Activated CD8-positive, alpha-beta T cell treated with anti-CD3 and anti-CD28 coated beads for 36 hours (primary cell): ENCODE measurements at regions of chr3 and their contacts with region 1.

Region 1: DNA sequence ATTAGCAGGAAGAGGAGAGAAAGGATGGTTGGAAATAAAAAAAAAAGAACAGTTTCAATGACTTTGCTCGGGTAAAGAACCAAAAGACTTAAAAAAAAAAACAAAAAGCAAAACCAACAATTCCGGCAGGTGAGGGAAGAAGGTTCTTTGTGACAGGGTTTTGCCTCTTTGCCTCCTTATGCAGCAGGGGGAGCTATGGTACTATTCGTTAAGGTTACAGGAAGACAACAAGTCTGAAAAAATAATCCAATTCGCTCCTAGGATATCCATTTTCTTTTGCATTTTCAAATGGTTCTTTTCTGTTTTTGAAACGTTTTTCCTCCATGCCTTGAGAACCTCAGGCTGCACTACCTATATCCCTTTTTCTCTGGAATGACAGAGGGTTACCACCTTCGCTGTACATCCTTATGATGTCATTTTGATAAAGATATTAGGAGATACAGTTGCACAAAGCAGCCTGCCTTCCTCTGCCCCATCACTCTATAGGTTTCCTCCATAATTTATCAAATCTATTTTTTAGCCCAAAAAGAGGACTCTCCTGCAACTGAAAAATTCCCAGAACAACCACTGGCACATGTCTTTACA is 55.0 kb downstream of the CFAP20DC start:
- DNase-seq: peak; percentile 50
- ATAC-seq: peak; percentile 55
- H3K4me3 Mint-ChIP-seq: no peak overlapping the region
- H3K27ac Mint-ChIP-seq: no peak overlapping the region
- H3K4me1 Mint-ChIP-seq: no peaks in the 10 kb centered on the region
- H3K27me3 Mint-ChIP-seq: peaks cover 1% of the 10 kb centered on the region
- CTCF ChIP-seq: peak; percentile 71

Region 2: GRCh38 chr3:59006634-59007517 is 12.0 kb after region 1 on chr3:
- CTCF ChIA-PET with region 1: no interaction called
- POLR2A ChIA-PET with region 1: no interaction called
- intact Hi-C with region 1: no loop called
- DNase-seq: no peak
- ATAC-seq: no peak
- H3K4me3 Mint-ChIP-seq: no peak overlapping the region
- H3K27ac Mint-ChIP-seq: no peak overlapping the region
- H3K4me1 Mint-ChIP-seq: no peaks in the 10 kb centered on the region
- H3K27me3 Mint-ChIP-seq: peaks cover 17% of the 10 kb centered on the region
- CTCF ChIP-seq: no peak

Region 3: DNA sequence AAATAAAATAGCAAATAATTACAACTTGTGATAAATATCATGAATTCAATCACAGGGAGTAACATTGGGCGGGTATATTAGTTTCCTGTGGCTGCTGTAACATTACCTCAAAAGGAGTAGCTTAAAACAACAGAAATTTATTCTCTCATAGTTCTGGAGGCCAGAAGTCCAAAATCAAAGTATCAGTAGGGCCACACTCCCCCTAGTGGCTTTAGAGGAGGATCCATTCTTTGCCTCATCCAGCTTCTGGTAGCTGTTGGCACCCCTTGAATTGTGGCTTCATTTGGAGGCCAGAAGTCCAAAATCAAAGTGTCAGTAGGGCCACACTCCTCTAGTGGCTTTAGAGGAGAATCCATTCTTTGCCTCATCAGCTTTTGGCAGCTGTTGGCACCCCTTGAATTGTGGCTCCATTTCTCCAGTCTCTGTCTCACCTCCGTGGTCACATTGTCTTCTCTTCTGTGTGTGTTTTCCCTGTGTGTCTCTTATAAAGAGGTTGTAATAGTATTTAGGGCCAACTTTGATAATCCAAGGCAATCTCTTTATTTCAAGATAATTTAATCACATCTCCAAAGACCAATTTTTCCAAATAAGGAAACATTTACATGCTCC is 58.1 kb after region 1 on chr3:
- CTCF ChIA-PET with region 1: interaction called, 8 read pairs
- POLR2A ChIA-PET with region 1: no interaction called
- intact Hi-C with region 1: loop called (anchors 2 kb)
- DNase-seq: peak; percentile 28
- ATAC-seq: no peak
- H3K4me3 Mint-ChIP-seq: no peak overlapping the region
- H3K27ac Mint-ChIP-seq: no peak overlapping the region
- H3K4me1 Mint-ChIP-seq: peaks cover 3% of the 10 kb centered on the region
- H3K27me3 Mint-ChIP-seq: peaks cover 4% of the 10 kb centered on the region
- CTCF ChIP-seq: peak; percentile 66